ENCODE measurements at regions of chr9 and their contacts with region 1.

Region 1: DNA sequence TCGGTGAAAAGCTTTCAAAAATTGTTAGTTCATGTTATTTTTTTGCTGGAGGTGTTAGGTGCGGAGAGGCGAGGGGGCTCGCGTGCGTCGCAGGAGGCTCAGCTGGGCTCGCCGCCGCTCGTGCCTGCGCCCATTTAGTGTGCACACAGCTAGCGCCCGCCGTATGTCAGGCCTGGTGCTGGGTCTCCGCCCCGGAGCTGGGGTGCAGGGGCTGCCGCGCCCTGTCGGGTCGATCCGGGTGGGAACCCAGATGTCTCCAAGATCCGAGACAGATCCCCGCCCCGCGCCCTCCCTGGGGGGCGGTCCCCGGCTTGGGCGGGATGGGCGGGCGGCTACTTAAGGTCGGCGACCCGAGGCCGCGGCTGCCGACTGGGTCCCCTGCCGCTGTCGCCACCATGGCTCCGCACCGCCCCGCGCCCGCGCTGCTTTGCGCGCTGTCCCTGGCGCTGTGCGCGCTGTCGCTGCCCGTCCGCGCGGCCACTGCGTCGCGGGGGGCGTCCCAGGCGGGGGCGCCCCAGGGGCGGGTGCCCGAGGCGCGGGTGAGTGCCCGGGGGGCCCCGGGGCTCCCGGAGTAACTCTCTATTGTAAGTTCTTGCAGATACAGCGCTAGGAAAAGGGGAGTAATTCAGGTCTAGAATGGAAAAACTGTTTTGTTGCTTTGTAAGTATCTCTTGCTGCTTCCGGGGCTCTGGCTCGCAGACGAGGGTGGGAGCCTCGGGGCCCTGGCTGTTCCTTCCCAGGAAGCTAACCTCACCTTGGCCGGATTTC is 31.7 kb downstream of the GSN start:
- DNase-seq: peak; percentile 79 to 87
- ATAC-seq: peak; percentile 77
- H3K4me3 ChIP-seq: peak overlapping the region; percentile 77 to 78
- H3K27ac ChIP-seq: peak overlapping the region; percentile 57 to 64
- H3K4me1 ChIP-seq: peaks cover 2 to 4% of the 10 kb centered on the region in 2 donors
- H3K27me3 ChIP-seq: no peaks in the 10 kb centered on the region

Region 2: GRCh38 chr9:121222524-121223171 is 77.0 kb before region 1 on chr9:
- intact Hi-C with region 1: loop called in 1 of 2 experiments (anchors 5 kb)
- DNase-seq: no peak
- ATAC-seq: no peak
- H3K4me3 ChIP-seq: no peak overlapping the region
- H3K27ac ChIP-seq: no peak overlapping the region
- H3K4me1 ChIP-seq: no peaks in the 10 kb centered on the region
- H3K27me3 ChIP-seq: no peaks in the 10 kb centered on the region

Region 3: GRCh38 chr9:121278535-121279261 is 21.0 kb before region 1 on chr9:
- intact Hi-C with region 1: loop called in 1 of 2 experiments (anchors 2 kb)
- DNase-seq: peak in 1 of 2 donors; percentile 80
- ATAC-seq: peak; percentile 85
- H3K4me3 ChIP-seq: no peak overlapping the region
- H3K27ac ChIP-seq: peak overlapping the region; percentile 81 to 98
- H3K4me1 ChIP-seq: peaks cover 20 to 25% of the 10 kb centered on the region in 2 donors
- H3K27me3 ChIP-seq: no peaks in the 10 kb centered on the region

Region 4: DNA sequence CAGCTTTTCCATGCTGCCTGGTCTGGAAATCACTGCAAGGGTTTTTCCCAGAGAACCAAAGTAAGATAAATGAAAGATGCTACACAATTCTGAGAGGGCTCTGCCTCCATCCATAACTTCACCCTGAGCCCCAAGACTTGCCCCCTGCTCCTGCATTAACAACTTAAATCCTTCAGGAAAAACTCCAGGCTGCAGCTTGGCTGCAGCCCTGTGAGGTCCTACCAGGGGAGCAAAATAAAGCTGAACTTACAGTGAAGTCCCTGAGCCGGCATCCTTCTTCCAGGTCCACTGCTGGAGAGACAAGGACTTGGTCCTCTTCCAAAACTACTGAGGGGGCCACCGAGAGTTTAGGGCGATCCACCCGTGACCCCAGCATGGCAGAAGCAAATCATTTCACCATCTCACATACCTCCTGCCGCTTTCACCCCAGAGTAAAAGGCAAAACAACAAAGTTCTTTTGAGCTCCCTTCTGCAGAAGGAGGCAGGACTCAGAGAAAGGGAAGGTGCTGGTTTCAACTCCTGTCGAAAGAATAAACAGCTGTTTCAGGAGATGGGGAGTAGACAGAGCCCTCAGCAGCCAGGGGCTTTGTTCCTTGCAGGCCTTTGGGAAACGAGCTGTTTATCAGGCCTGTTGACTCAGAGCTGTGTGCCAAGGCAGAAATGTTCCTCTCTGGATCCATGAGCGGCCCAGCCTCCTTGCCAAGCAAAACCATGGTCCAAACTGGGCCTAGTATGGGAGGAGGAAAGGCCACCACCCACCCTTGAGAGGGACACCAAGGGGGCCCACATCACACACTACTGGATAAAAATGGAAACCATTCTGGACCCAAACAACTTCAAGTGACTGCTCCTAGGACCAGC is 179.4 kb after region 1 on chr9:
- intact Hi-C with region 1: loop called in 1 of 2 experiments (anchors 10 kb)
- DNase-seq: peak in 1 of 2 donors; percentile 84
- ATAC-seq: peak; percentile 87
- H3K4me3 ChIP-seq: peak overlapping the region; percentile 3 to 25
- H3K27ac ChIP-seq: peak overlapping the region; percentile 78 to 97
- H3K4me1 ChIP-seq: peaks cover 0 to 10% of the 10 kb centered on the region in 2 donors
- H3K27me3 ChIP-seq: no peaks in the 10 kb centered on the region

Measured in aorta (tissue), 5 donors.